HEK293 (cell line): ENCODE measurements at regions of chr12 and their contacts with region 1.

Region 1: GRCh38 chr12:49288412-49288853 is 6.5 kb upstream of the PRPH start:
- H3K4me3 ChIP-seq: no peak overlapping the region
- H3K27ac ChIP-seq: no peak overlapping the region
- H3K4me1 ChIP-seq: no peaks in the 10 kb centered on the region
- CTCF ChIP-seq: peak; percentile 89

Region 2: GRCh38 chr12:48957141-48958048 is 331.0 kb before region 1 on chr12 and contains the start of gene ARF3:
- CTCF ChIA-PET with region 1: no interaction called
- POLR2A ChIA-PET with region 1: no interaction called
- H3K4me3 ChIP-seq: peak within 1 kb of the TSS; percentile 81
- H3K27ac ChIP-seq: peak within 1 kb of the TSS; percentile 90
- H3K4me1 ChIP-seq: no peaks in the 10 kb centered on the region
- CTCF ChIP-seq: no peak; the same call in none of the 2 replicates

Region 3: GRCh38 chr12:49274396-49275286 is 13.8 kb before region 1 on chr12:
- CTCF ChIA-PET with region 1: interaction called, 12 read pairs
- POLR2A ChIA-PET with region 1: interaction called, 5 read pairs
- H3K4me3 ChIP-seq: no peak overlapping the region
- H3K27ac ChIP-seq: no peak overlapping the region
- H3K4me1 ChIP-seq: peaks cover 4% of the 10 kb centered on the region; the same call in 1 of the 2 replicates
- CTCF ChIP-seq: no peak

Region 4: DNA sequence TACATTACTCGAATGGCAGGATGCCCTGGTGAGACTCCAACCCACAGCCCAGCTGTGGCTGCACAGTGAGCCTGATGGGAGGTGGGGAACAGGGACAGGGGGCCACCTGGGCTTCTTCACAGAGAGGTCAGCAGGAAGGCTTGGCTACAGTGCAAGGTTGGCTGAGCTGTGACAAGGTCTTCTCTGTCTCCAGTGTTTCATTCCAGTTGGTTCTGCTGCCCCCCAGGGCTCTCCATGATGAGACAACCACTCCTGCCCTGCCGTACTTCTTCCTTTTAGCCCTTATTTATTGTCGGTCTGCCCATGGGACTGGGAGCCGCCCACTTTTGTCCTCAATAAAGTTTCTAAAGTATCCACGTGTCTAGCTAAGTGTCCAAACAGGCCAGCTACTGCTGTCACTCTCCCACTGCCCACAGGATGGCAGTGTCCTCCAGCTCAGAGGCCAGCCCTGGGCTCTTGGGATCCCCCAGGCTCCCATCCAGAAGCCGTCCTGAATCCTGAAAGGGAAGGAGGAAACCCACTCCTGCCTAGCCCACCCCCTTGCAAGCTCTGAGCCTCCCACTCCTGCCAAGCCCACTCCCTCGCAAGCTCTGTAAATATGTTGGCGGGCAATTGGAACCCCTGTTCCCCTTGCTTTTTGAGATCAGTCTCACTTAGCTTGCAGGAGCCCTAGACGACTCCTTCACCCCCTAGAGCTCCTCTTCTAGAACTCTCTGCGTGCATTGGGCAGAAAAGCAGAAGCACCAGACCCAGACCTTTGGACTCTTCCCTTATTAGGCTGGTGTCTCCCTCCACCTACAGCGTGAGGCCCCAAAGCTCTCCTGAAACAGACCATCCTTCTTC is 43.2 kb after region 1 on chr12:
- CTCF ChIA-PET with region 1: interaction called, 185 read pairs
- POLR2A ChIA-PET with region 1: interaction called, 6 read pairs
- H3K4me3 ChIP-seq: no peak overlapping the region
- H3K27ac ChIP-seq: no peak overlapping the region
- H3K4me1 ChIP-seq: peaks cover 5% of the 10 kb centered on the region; the same call in 1 of the 2 replicates
- CTCF ChIP-seq: peak; percentile 88

Region 5: DNA sequence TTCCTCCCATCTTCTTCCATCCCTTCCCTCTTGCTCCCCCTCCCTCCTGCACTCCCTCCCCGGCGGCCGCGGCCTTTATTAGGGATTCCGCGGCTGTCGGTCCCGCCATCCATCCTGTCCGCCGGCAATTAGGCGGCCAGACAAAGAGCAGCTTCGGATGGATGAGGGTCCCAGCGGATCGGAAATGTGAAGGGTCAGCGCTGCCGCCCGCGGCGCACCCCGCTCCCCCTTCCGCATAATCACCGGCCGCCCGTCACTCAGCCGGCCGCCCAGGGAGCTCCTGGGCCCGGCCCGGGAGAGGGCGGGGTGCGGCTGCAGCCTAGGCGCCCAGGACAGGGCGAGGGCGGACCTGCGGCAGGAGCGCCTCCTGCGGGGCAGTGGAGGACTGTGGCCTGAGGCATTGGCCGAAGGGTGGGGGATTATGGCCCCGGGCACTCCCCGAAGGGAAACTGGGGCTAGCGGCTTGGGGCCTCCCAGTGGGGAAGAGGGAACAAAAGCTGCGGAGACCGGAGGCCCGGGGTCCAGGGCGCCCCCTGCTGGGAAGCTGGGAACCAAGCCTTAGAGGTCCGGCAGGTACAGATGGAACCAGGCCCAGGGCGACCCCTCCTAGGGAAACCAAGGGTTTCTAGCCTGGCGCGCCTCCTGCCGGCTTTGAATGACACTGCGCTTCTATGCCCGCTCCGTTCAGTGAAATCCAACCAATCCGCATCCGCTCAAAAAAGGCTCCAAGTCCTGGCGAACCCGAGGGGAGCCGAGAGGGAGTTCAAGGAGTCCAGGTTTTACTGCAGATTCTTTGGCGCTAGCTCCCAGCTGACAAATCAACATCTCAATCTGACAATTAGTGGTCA is 53.9 kb after region 1 on chr12:
- CTCF ChIA-PET with region 1: interaction called, 185 read pairs
- POLR2A ChIA-PET with region 1: interaction called, 7 read pairs
- H3K4me3 ChIP-seq: peak overlapping the region; percentile 20
- H3K27ac ChIP-seq: peak overlapping the region; percentile 21; the same call in 1 of the 2 replicates
- H3K4me1 ChIP-seq: peaks cover 22% of the 10 kb centered on the region
- CTCF ChIP-seq: peak; percentile 88

Region 6: DNA sequence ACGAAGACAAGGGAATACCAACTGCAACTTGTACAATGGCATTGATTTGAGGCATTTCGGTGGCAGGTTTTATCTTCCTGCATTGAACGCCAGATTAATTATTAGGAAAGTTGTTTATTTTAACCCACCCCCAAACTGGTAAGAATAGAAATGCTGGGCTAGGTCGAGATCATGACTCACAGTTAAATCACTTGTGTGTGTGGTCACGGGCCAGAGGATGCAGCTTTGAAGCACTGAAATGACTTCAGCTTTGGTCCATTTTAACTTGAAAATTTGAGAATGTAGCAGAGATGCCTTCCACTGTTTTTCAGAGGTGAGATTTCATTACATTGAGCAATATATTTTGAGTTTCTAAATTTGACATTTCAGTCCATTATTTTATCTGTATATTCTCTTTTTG is 226.8 kb after region 1 on chr12:
- CTCF ChIA-PET with region 1: interaction called, 30 read pairs
- POLR2A ChIA-PET with region 1: no interaction called
- H3K4me3 ChIP-seq: no peak overlapping the region
- H3K27ac ChIP-seq: no peak overlapping the region
- H3K4me1 ChIP-seq: peaks cover 5% of the 10 kb centered on the region
- CTCF ChIP-seq: no peak

Region 7: DNA sequence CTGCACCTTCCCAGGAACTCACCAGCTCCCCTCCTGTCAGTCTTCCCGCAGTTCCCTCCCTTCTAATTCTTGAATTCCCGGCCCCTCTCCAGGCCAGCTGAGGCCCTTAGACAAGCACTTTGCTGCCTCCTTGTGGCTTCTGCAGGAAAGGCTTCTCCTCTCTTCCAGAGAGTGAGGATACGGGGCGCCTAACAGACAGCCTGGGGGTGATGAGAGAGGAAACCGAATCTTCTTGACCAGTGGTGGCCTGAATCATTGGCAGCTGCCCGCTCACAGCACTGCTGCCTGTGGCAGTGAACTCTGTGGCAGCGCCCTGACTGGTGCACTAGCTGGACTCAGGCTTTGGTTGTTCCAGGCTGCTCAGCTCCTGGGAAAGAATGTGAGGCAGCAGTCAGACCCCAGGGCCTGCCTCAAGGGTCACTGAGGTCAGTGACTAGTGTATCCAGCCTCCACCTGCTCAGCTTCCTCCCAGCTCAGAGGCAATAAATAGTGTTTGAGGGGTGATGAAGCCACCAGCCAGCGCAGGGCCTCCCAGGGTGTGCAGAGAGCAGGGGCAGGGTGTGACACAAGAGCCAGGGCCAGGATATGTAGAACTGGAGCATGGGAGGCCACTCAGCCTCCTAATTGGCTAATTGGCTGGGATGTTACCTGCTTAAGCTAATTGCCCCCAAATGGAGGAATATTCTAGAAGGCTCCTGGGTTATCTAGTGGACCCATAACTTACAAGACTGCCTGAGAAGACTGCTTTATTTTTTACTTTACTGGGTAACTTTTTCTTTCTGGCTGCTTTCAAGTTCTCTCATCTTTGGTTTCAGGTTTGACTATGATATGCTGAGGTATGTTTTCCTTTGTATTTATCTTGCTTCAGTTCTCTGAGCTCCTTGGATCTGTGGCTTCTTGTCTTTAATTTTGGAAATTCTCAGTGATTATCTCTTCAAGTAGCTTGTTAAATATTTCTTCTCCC is 292.4 kb after region 1 on chr12:
- CTCF ChIA-PET with region 1: interaction called, 11 read pairs
- POLR2A ChIA-PET with region 1: no interaction called
- H3K4me3 ChIP-seq: no peak overlapping the region
- H3K27ac ChIP-seq: no peak overlapping the region
- H3K4me1 ChIP-seq: no peaks in the 10 kb centered on the region
- CTCF ChIP-seq: peak; percentile 90